Calu3 (cell line): ENCODE measurements at regions of chr10 and their contacts with region 1.

Region 1: GRCh38 chr10:24724381-24725228 is 918 bp upstream of the ARHGAP21 start:
- DNase-seq: peak; percentile 98
- H3K4me3 Mint-ChIP-seq: no peak overlapping the region
- H3K27ac Mint-ChIP-seq: peak overlapping the region; percentile 88
- H3K4me1 Mint-ChIP-seq: peaks cover 6% of the 10 kb centered on the region
- H3K27me3 Mint-ChIP-seq: no peaks in the 10 kb centered on the region
- CTCF ChIP-seq: no peak

Region 2: DNA sequence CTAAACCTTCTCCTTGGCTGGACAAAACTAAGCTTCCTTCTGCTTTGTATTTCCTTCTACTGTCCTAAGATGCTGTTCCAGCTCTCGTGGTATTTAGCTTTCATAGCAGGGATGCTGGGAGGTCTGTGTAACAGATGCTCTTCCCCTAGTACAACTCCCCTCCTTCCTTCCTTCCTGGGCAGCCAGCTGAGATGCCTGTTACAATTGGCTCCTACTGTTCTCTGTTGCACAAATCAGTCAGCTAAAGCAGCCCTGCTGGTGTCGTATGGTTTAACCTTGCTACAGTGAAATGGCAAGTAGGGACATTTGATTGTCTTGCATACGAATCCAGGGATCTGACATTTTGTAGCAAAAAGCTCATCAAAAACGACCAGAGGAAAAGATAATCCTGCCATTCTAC is 144.7 kb before region 1 on chr10:
- CTCF ChIA-PET with region 1: no interaction called
- intact Hi-C with region 1: no loop called
- DNase-seq: no peak
- H3K4me3 Mint-ChIP-seq: no peak overlapping the region
- H3K27ac Mint-ChIP-seq: no peak overlapping the region
- H3K4me1 Mint-ChIP-seq: no peaks in the 10 kb centered on the region
- H3K27me3 Mint-ChIP-seq: no peaks in the 10 kb centered on the region
- CTCF ChIP-seq: no peak

Region 3: GRCh38 chr10:24706479-24707118 is 18.0 kb before region 1 on chr10:
- CTCF ChIA-PET with region 1: no interaction called
- intact Hi-C with region 1: loop called (anchors 2 kb)
- DNase-seq: peak; percentile 40
- H3K4me3 Mint-ChIP-seq: no peak overlapping the region
- H3K27ac Mint-ChIP-seq: no peak overlapping the region
- H3K4me1 Mint-ChIP-seq: peaks cover 19% of the 10 kb centered on the region
- H3K27me3 Mint-ChIP-seq: no peaks in the 10 kb centered on the region
- CTCF ChIP-seq: no peak

Region 4: DNA sequence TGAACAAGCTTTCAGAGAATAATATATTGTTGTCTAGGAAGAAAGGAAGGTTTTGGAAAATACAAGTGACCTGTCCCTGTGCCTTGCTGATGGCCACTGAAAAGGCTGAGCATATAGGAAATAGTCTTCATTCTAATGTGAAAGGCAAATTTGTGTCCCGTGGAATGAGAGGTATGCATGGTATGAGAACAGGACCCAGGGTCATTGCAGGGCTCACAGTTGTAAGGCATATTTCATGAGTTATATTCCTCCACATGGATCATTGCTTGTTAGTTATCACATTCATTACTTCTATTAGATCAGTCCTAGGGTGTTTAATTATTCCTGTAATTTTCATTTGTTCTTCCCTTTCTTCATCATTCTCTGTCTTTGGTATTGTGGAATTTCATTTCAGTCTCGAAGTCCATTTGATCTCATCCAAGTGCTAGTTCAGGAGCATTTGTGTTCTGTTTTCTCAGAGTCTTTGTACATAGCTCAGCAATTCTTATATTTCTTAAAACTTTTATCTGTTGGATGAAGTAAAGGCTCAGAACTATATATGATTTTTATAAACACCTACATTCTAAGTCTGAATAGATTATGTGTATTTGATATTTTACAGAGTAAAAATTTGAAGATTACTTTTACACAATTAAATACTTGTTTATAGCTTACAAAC is 38.5 kb after region 1 on chr10:
- CTCF ChIA-PET with region 1: no interaction called
- intact Hi-C with region 1: loop called (anchors 5 kb)
- DNase-seq: peak; percentile 33
- H3K4me3 Mint-ChIP-seq: no peak overlapping the region
- H3K27ac Mint-ChIP-seq: no peak overlapping the region
- H3K4me1 Mint-ChIP-seq: peaks cover 21% of the 10 kb centered on the region
- H3K27me3 Mint-ChIP-seq: no peaks in the 10 kb centered on the region
- CTCF ChIP-seq: no peak

Region 5: DNA sequence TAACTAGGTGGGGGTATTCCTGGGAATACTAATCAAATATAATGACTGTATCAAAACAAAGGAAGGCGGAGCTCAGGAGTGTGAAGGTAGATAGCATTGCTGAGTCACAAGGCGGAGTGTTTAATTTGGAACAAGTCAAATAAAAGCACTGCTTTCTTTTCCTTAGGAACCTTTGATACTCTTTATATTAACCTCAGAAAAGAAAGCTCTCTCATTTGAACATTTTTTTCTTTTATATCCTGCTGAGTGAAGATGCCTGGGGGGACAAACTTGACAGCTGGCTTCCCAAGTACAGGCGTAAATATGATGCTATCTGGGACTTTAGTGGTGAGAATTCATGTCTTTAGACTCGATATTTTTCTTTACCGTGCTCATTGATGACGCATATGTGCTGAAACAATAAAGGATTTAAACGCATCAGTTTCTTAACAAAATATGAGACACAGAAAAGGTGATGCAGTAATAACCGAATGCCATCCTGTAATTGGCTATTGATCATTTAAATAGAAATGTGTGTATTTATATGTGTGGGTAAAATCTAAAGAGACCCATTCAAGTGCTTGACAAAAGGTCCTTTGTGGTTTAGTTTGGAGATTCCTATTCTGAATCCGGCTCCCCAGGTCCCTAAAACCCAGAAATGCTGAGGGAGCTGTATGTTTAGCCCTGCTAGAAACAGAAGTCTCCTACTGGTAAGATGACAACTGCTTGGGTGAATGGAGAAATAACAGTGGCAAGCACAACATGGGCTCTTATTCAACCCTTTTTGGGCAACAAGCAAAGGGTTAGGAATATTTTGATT is 125.1 kb after region 1 on chr10:
- CTCF ChIA-PET with region 1: no interaction called
- intact Hi-C with region 1: loop called (anchors 10 kb)
- DNase-seq: peak; percentile 31
- H3K4me3 Mint-ChIP-seq: peak overlapping the region; percentile 46
- H3K27ac Mint-ChIP-seq: peak overlapping the region; percentile 42
- H3K4me1 Mint-ChIP-seq: peaks cover 28% of the 10 kb centered on the region
- H3K27me3 Mint-ChIP-seq: no peaks in the 10 kb centered on the region
- CTCF ChIP-seq: no peak

Region 6: GRCh38 chr10:24952707-24953645 is 228.4 kb after region 1 on chr10:
- CTCF ChIA-PET with region 1: interaction called, 5 read pairs
- intact Hi-C with region 1: loop called (anchors 5 kb)
- DNase-seq: peak; percentile 71
- H3K4me3 Mint-ChIP-seq: peak overlapping the region; percentile 67
- H3K27ac Mint-ChIP-seq: peak overlapping the region; percentile 88
- H3K4me1 Mint-ChIP-seq: peaks cover 47% of the 10 kb centered on the region
- H3K27me3 Mint-ChIP-seq: no peaks in the 10 kb centered on the region
- CTCF ChIP-seq: peak; percentile 60

Region 7: GRCh38 chr10:24989867-24990266 is 265.3 kb after region 1 on chr10:
- CTCF ChIA-PET with region 1: no interaction called
- intact Hi-C with region 1: loop called (anchors 5 kb)
- DNase-seq: no peak
- H3K4me3 Mint-ChIP-seq: no peak overlapping the region
- H3K27ac Mint-ChIP-seq: no peak overlapping the region
- H3K4me1 Mint-ChIP-seq: no peaks in the 10 kb centered on the region
- H3K27me3 Mint-ChIP-seq: no peaks in the 10 kb centered on the region
- CTCF ChIP-seq: no peak